OCI-LY7 (cell line): ENCODE measurements at regions of chr7 and their contacts with region 1.

Region 1: DNA sequence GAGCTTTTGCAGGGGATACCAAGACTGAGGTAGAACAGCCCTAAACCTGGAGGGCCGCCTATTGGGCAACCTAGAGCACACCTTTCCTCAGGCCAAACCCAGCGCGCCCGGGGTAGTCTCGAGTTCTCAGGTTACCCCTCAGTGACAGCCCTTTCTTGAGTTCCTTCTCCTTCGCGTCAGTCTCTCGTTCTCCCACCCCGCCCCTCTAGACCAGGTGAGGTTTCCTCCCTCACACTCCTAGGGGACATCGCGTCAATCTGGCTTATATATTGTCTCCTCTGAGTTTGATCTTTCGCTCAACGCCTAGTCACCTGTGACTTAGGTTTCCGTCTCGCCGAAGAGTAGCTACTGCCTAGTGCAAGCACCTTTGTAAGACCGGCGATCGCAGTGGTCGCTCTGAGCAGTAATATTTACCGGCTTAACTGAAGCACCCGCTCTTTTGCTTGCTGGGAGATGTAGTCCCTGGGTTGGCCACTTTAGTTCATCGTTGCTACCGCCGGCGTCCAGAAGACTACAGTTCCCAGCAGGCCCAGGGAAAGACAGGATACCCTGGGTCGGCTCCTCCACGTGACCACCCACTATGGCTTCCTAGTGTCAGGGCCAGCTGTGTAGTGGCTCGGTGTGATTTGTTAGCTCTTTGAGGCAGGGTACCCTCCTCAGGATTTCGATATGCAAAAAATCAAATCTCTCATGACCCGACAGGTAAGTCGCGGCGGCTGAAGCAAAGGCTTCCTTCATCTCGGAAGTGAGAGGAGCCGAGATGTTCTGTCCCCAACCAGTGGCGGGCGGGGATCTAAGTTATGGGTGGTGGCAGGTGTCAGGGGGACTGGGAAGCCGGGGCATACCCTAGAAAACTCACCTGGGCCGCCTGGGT is at the start of gene VPS50:
- DNase-seq: peak; percentile 95
- H3K4me3 ChIP-seq: peak within 1 kb of the TSS; percentile 96
- H3K27ac ChIP-seq: peak within 1 kb of the TSS; percentile 44
- H3K4me1 ChIP-seq: peaks cover 25% of the 10 kb centered on the region
- CTCF ChIP-seq: no peak
- total RNA-seq, gene VPS50: 14.9 and 17.9 TPM in 2 replicates

Region 2: DNA sequence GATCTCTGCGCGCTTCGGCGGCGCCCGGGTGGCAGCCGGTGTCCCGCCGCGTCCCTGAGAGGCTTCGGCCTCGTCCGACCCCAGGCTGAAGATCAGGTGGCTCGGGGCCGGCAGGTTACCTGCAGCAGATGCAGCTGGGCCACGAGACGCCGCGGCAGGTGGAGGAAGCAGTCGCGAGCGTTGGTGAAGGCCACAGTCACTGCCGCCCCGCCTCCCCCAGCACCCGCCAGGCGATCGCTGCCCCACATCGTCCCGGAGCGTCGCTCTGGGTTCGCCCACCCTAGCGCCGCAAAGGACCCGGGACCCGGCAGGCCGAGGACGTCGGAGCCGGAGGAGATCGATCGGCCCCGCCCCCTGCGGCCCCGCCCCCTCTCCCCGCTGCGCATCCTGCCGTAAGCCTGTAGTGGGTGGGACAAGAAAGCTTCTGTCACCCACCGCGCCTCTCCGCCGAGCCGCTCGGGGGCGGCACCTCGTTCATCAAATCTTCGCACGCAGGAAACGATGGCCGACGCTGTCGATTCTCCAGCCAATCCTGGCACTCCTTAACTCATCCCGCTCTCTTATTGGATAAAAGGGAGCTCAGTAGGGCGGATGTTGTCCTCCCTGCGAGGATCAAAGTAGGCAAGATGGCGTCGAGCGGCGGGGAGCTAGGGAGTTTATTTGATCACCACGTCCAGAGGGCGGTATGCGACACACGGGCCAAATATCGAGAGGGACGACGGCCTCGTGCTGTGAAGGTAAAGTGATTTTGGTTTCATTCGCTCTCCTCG is 703.7 kb before region 1 on chr7 and contains the starts of genes PEX1 and RBM48:
- CTCF ChIA-PET with region 1: no interaction called
- POLR2A ChIA-PET with region 1: no interaction called
- intact Hi-C with region 1: loop called (anchors 2 kb)
- DNase-seq: peak; percentile 99
- H3K4me3 ChIP-seq: peak within 1 kb of the TSS; percentile 84
- H3K27ac ChIP-seq: peak within 1 kb of the TSS; percentile 81
- H3K4me1 ChIP-seq: peaks cover 14% of the 10 kb centered on the region
- CTCF ChIP-seq: peak; percentile 78
- total RNA-seq, gene PEX1: 28.3 and 28.7 TPM in 2 replicates
- total RNA-seq, gene RBM48: 7.7 and 10.7 TPM in 2 replicates

Region 3: GRCh38 chr7:92598310-92598981 is 633.6 kb before region 1 on chr7:
- CTCF ChIA-PET with region 1: no interaction called
- POLR2A ChIA-PET with region 1: no interaction called
- intact Hi-C with region 1: loop called (anchors 10 kb)
- DNase-seq: no peak
- H3K4me3 ChIP-seq: no peak overlapping the region
- H3K27ac ChIP-seq: no peak overlapping the region
- H3K4me1 ChIP-seq: no peaks in the 10 kb centered on the region
- CTCF ChIP-seq: no peak

Region 4: GRCh38 chr7:93092757-93093370 is 139.2 kb before region 1 on chr7:
- CTCF ChIA-PET with region 1: no interaction called
- POLR2A ChIA-PET with region 1: no interaction called
- intact Hi-C with region 1: loop called (anchors 1 kb)
- DNase-seq: peak; percentile 30
- H3K4me3 ChIP-seq: no peak overlapping the region
- H3K27ac ChIP-seq: no peak overlapping the region
- H3K4me1 ChIP-seq: no peaks in the 10 kb centered on the region
- CTCF ChIP-seq: peak; percentile 65

Region 5: GRCh38 chr7:93245525-93246432 is 13.7 kb after region 1 on chr7:
- CTCF ChIA-PET with region 1: interaction called, 3 read pairs
- POLR2A ChIA-PET with region 1: interaction called, 13 read pairs
- intact Hi-C with region 1: no loop called
- DNase-seq: peak; percentile 39
- H3K4me3 ChIP-seq: no peak overlapping the region
- H3K27ac ChIP-seq: no peak overlapping the region
- H3K4me1 ChIP-seq: no peaks in the 10 kb centered on the region
- CTCF ChIP-seq: peak; percentile 90

Region 6: GRCh38 chr7:93307131-93307660 is 75.2 kb after region 1 on chr7:
- CTCF ChIA-PET with region 1: no interaction called
- POLR2A ChIA-PET with region 1: no interaction called
- intact Hi-C with region 1: no loop called
- DNase-seq: no peak
- H3K4me3 ChIP-seq: no peak overlapping the region
- H3K27ac ChIP-seq: no peak overlapping the region
- H3K4me1 ChIP-seq: no peaks in the 10 kb centered on the region
- CTCF ChIP-seq: no peak

Region 7: DNA sequence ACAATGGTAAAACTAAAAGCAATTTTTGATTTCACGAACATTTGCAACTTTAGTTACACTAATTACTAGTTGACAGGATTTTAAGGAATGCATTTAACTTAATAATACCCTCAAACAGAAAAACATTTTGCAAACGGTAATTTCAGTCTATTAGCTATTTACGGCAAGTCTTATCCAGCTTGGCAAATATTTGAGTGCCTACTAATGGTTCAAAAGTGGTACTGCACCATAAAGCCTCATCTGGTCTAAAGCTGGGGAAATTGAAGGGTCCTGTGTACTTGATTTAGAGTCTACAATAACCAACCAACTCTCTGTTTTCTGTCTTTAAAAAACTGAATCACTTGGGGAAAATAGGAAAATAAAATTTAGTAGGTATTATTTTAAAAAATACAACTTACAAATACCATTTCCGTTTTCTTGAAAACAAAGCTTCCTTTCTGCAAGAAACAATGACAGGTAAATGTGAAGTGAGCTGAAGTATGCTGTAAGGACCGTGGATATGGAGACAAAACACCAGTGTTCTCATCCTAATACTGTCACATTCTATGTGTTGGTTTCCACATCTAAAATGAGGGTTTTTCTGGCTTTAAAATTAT is 142.4 kb after region 1 on chr7:
- CTCF ChIA-PET with region 1: no interaction called
- POLR2A ChIA-PET with region 1: interaction called, 4 read pairs
- intact Hi-C with region 1: loop called (anchors 5 kb)
- DNase-seq: peak; percentile 59
- H3K4me3 ChIP-seq: no peak overlapping the region
- H3K27ac ChIP-seq: no peak overlapping the region
- H3K4me1 ChIP-seq: peaks cover 29% of the 10 kb centered on the region
- CTCF ChIP-seq: peak; percentile 91